Dendritic cell treated with granulocyte-macrophage colony-stimulating factor and Interleukin-4, amounts not matched to agents 40 ng/mL and 50 ng/mL, for 4 days (primary cell): ENCODE measurements at regions of chr9 and their contacts with region 1.

Region 1: DNA sequence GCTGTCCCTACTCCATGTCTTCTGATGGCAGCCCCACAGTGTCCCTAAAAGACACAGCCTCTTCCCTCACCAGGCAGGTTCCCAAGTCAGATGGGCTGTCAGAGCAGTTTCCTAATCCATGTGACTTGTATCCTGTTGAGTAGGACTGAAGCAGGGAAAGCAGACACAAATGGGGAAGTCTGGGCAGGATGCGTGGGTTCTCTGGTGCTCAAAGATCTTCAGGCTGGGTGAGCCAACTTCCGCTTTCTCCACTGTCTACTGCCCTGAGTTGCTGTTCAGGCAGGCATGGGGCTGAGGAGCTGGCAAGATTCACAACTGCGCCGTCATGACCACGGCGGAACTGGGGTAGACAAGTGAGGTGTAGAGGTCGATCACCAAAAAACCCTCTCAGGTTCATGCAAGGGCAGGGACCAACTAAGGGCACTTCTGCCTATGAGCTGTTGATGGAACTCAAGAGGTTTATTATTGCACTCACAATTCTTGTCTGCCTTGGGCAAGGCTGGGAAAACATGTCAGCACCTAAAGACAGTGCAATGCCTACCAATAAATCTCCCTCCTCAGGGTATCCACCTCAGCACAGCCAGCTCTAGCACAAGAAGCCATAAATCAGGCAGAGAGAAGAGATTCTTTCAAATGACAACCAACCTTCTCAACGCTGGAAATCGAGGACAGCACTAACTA is 83.4 kb downstream of the RAPGEF1 start:
- H3K4me3 Mint-ChIP-seq: peak overlapping the region; percentile 38
- H3K27ac Mint-ChIP-seq: peak overlapping the region; percentile 84
- H3K4me1 Mint-ChIP-seq: peaks cover 69% of the 10 kb centered on the region
- H3K27me3 Mint-ChIP-seq: no peaks in the 10 kb centered on the region

Region 2: GRCh38 chr9:131270171-131271015 is 386.1 kb before region 1 on chr9:
- intact Hi-C with region 1: no loop called
- H3K4me3 Mint-ChIP-seq: peak overlapping the region; percentile 75
- H3K27ac Mint-ChIP-seq: peak overlapping the region; percentile 93
- H3K4me1 Mint-ChIP-seq: peaks cover 79% of the 10 kb centered on the region
- H3K27me3 Mint-ChIP-seq: no peaks in the 10 kb centered on the region

Region 3: GRCh38 chr9:131608493-131609037 is 47.9 kb before region 1 on chr9:
- intact Hi-C with region 1: no loop called
- H3K4me3 Mint-ChIP-seq: no peak overlapping the region
- H3K27ac Mint-ChIP-seq: peak overlapping the region; percentile 62
- H3K4me1 Mint-ChIP-seq: peaks cover 88% of the 10 kb centered on the region
- H3K27me3 Mint-ChIP-seq: no peaks in the 10 kb centered on the region

Region 4: DNA sequence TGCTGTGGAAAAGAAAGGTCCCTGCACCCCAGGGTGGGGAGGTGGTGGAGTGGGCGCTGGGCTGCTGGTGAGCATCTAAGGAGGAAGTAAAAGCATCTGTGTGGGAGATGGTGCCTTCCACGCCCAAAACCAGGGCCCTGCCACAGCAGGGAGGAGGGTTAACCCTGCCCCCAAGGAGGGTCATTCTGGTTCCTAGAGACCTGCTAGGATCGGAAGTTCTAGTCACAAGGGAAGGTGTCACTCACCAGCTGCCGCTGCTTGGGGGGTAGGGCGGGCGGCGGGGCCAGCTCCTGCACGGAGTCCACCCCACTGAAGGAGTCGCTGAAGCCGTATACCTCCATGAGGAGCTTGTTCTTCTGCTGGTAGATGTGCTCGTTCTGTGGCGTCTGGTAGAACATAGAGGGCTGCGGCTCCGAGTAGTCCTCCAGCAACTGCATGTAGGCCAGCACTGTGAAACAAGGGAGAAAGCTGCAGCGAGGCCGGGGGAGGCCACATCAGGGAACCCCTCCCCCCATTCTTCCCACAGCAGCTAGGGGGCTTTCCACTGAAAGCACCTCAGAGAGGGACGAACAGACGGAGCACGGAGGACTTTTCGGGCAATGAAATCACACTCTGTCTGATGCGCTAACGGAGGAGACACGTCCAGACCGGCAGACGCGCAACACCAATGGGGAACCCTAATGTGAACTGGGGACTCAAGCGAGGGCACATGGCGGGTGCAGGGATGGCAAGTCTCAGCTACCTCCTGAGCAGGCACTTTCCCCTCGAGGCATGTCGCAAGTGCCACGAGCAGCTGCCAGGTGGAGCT is 34.7 kb before region 1 on chr9:
- intact Hi-C with region 1: loop called (anchors 5 kb)
- H3K4me3 Mint-ChIP-seq: peak overlapping the region; percentile 45
- H3K27ac Mint-ChIP-seq: peak overlapping the region; percentile 98
- H3K4me1 Mint-ChIP-seq: peaks cover 89% of the 10 kb centered on the region
- H3K27me3 Mint-ChIP-seq: no peaks in the 10 kb centered on the region